ENCODE measurements at regions of chr4 and their contacts with region 1.

Region 1: GRCh38 chr4:1746265-1746691 is 25.0 kb downstream of the TACC3 start:
- DNase-seq: peak; percentile 89

Region 2: DNA sequence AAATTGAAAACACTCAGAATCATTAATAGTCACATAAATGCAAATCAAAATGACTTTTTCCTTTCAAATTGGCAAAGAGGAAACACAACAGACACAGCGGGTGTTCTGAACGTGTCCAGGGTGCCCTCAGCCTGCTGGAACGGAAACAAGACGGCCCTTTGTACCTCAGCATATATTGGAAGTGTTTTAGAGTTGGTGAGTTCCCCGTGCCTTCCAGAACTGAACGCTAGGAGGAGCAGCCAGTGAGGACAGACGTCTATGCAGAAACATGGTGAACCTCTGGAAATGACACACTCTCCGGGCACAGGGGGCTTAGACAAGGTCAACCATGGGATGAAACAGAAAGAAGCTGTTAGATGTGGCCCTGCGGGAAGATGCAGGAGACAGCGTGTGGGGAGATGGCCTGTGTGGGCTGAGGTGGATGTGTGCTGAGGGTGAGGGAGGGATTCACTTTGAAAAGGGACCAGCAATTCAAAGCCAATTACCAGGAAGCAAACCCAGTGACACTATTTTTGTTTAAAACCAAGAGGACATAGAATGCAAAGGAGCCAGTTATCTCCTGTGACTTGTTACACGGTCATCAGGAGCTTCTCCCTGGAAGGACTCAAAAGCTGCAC is 673.3 kb before region 1 on chr4:
- intact Hi-C with region 1: no loop called
- DNase-seq: peak; percentile 78

Region 3: GRCh38 chr4:1683736-1684505 is 62.4 kb before region 1 on chr4 and contains the start of gene FAM53A:
- intact Hi-C with region 1: no loop called
- DNase-seq: peak; percentile 97
- total RNA-seq, gene FAM53A: 1.5 to 1.7 TPM

Region 4: DNA sequence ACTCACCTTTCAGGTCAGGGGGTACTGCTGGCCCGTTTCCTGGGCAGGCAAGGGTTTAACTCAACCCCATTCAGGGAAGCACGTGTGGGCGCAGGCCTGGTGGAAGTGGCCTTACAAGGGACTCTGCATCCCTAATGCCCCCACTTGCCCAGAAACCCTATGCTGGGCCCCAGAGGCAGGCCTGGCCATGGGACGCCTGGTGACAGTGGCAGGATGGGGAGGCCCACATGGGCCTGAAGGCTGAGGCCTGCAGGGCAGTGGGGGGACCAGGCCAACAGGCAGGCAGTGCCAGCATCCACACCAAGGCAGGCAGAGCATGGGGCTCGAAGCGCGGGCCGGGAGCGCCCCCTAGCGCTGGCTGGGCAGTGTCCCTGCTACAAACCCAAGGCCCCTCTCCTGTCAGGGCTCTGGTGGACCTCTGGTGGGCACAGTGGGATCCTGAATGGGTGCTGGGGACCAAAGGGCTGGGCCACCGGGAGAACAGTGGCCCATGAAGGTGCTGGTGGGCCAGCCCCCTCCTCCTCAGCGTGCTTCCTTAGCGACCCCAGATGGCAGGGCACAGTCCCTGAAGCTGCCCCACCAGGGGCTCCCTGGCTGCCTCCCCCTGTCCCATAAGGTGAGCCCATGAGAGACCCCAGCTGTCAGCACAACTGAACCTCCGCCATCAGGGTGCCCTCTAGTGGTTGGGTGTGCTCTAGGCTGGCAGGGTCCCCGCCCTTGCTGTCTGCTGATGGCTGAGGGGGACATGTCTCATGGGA is 63.7 kb after region 1 on chr4:
- intact Hi-C with region 1: loop called in 1 of 2 experiments (anchors 5 kb)
- DNase-seq: no peak

Region 5: DNA sequence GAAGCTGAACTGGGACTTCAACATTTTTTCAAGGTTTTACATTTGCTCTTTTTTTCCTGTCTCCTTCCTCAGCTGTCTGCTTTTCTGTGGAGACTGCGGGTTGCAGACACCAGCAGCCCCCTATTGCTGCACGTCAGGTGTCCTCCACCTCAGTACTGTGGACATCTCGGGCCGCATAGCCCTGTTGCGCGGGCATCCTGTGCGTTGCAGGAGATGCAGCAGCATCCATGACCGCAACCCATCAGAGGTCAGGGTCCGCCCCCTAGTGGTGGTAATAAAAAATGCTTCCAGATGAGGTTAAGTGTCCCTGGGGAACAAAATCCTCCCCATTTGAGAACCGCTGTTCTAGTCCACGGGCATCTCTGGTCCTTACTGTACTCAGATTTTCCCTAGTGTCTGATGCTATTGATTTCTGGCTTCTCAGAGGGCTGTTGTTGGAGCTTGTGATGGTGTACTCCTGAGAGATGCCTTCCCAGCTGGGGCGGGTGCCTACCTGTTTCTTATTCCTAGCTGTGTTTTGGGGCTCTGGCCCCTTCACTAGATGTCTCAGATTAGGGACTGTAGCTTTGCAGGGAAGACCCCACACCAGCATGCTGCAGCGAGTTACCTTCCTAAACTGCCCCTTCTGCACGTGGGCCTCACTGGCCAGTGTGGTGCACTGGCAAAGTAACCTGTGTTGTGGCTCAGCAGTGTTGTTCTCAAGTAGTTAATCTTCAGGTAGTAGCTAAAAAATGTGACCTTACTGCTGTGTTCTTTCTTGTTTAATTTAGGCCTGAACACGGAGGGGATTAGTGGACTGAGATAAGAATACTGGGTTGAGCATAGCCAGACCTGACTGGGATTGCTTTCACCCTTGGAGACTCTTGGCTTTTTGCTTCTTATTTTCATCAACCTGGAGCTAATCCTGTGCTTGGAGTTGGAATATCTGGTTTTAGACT is 153.1 kb after region 1 on chr4:
- intact Hi-C with region 1: loop called (anchors 5 kb)
- DNase-seq: peak; percentile 84

Region 6: GRCh38 chr4:2059034-2059725 is 312.9 kb after region 1 on chr4 and contains the start of gene NAT8L:
- intact Hi-C with region 1: no loop called
- DNase-seq: peak; percentile 75
- total RNA-seq, gene NAT8L: 0.19 to 0.52 TPM

Region 7: DNA sequence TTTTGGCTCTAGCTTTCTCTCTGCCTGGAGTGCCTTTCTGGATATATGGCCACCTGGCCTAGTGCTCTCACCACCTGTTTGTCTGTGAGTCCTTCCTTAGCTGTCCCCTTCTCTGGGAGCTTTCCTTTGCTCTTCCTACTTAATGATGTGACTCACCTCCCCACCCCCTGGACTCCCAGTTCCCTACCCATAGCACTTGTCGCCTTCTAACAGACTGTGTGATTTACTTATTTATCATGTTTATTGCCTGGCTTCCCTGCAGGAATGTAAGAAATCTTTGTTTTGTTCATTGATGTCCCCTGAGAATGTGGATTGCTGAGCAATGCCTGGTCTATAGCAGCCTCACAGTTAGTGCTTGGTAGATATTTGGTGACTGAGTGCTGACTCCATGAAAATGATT is 1116.2 kb after region 1 on chr4:
- intact Hi-C with region 1: no loop called
- DNase-seq: no peak